B cell (primary cell): ENCODE measurements at regions of chr7 and their contacts with region 1.

Region 1: DNA sequence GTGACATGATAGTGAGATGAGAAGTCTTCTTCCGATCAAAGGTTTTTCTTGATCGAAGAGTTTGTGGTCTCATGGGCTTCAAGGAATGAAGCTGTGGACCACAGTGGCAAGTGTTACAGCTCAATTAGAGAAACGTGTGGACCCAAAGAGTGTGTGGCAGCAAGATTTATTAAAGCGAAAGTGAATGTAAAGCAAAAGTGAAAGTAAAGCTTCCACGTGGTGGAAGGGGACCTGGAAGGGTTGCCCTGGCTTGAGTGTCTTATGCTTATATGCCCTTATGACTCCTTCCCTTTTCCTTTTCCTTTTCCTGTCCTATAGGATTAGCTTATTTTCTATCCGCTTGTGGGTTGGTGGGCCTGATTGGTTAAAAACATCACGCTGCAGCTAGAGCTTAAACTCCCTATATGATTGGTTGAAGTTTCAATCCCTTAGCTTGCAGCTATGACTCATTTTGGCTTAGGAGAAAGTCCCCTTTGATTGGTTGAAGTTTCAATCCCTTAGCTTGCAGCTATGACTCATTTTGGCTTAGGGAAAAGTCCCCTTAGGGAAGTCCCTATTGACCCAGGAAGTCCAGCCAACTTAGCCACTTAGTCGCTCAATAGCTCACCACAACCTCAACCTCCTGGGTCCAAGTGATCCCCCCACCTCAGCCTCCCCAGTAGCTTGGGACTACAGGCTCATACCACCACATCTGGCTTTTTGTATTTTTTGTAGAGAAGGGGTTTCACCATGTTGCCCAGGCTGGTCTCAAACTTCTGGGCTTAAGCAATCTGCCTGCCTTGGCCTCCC is 34.7 kb downstream of the MRPS24 start:
- DNase-seq: peak; percentile 72
- ATAC-seq: peak; percentile 46
- H3K4me3 ChIP-seq: peak overlapping the region in 4 of 5 experiments; percentile 35 to 68 (median 50)
- H3K4me3 Mint-ChIP-seq: peak overlapping the region; percentile 93
- H3K27ac ChIP-seq: no peak overlapping the region
- H3K27ac Mint-ChIP-seq: peak overlapping the region; percentile 92
- H3K4me1 ChIP-seq: peaks cover 13 to 14% of the 10 kb centered on the region in 2 donors
- H3K4me1 Mint-ChIP-seq: peaks cover 18% of the 10 kb centered on the region
- H3K27me3 ChIP-seq: no peaks in the 10 kb centered on the region
- H3K27me3 Mint-ChIP-seq: peaks cover under 1% of the 10 kb centered on the region
- CTCF ChIP-seq: no peak

Region 2: DNA sequence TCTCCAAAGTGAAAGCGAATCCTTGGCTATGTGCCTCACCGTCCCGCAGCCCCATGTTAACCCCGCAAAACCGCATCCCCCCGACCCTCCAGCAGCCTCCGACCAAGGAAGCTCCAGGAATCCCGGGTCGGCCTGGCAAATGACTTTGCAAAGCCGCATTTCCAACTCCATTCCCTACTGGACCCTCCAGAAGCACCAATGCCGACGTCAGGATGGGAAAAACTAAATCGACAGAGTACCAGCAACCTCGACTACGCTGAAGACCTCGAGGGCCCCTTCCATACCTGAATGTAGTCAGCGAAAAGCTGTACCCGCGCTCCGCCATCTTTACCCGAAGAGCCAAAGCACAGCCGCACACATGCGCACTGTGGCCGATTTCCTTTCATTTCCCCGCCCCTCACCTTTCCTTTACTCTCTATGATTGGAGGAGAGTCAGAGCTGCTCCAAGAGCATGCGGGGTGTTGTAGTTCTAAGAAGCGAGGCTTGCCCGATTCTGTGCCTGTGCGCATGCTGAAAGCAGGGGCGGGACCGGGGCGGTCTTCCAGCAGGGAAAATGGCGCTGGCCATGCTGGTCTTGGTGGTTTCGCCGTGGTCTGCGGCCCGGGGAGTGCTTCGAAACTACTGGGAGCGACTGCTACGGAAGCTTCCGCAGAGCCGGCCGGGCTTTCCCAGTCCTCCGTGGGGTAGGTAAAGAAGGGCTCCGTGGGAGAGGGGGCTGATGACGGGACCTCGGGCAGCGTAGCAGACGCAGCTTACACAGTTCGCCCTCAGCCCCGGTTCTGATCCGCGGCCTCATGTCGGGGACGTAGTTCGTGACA is 902.6 kb before region 1 on chr7 and contains the starts of genes MRPL32 and PSMA2:
- CTCF ChIA-PET with region 1: interaction called, 4 read pairs
- POLR2A ChIA-PET with region 1: no interaction called
- intact Hi-C with region 1: loop called (anchors 1 kb)
- DNase-seq: peak; percentile 97
- ATAC-seq: peak; percentile 100
- H3K4me3 ChIP-seq: peak within 1 kb of the TSS; percentile 79 to 98 (median 90)
- H3K4me3 Mint-ChIP-seq: peak within 1 kb of the TSS; percentile 91
- H3K27ac ChIP-seq: peak within 1 kb of the TSS; percentile 77 to 88
- H3K27ac Mint-ChIP-seq: peak within 1 kb of the TSS; percentile 94
- H3K4me1 ChIP-seq: peaks cover 36 to 38% of the 10 kb centered on the region in 2 donors
- H3K4me1 Mint-ChIP-seq: peaks cover 67% of the 10 kb centered on the region
- H3K27me3 ChIP-seq: no peaks in the 10 kb centered on the region
- H3K27me3 Mint-ChIP-seq: no peaks in the 10 kb centered on the region
- CTCF ChIP-seq: no peak
- total RNA-seq, gene MRPL32: 31.7 and 34.2 TPM in 2 replicates
- total RNA-seq, gene PSMA2: 40.6 and 47.8 TPM in 2 replicates

Region 3: GRCh38 chr7:43721193-43721806 is 113.4 kb before region 1 on chr7:
- CTCF ChIA-PET with region 1: interaction called, 11 read pairs
- POLR2A ChIA-PET with region 1: no interaction called
- intact Hi-C with region 1: loop called (anchors 2 kb)
- DNase-seq: peak; percentile 73
- ATAC-seq: peak; percentile 33
- H3K4me3 ChIP-seq: no peak overlapping the region
- H3K4me3 Mint-ChIP-seq: no peak overlapping the region
- H3K27ac ChIP-seq: no peak overlapping the region
- H3K27ac Mint-ChIP-seq: no peak overlapping the region
- H3K4me1 ChIP-seq: no peaks in the 10 kb centered on the region
- H3K4me1 Mint-ChIP-seq: peaks cover 22% of the 10 kb centered on the region
- H3K27me3 ChIP-seq: no peaks in the 10 kb centered on the region
- H3K27me3 Mint-ChIP-seq: no peaks in the 10 kb centered on the region
- CTCF ChIP-seq: peak; percentile 89

Region 4: GRCh38 chr7:43847496-43847895 is 12.8 kb after region 1 on chr7:
- CTCF ChIA-PET with region 1: interaction called, 15 read pairs
- POLR2A ChIA-PET with region 1: no interaction called
- intact Hi-C with region 1: no loop called
- DNase-seq: no peak
- ATAC-seq: no peak
- H3K4me3 ChIP-seq: no peak overlapping the region
- H3K4me3 Mint-ChIP-seq: no peak overlapping the region
- H3K27ac ChIP-seq: no peak overlapping the region
- H3K27ac Mint-ChIP-seq: no peak overlapping the region
- H3K4me1 ChIP-seq: no peaks in the 10 kb centered on the region
- H3K4me1 Mint-ChIP-seq: no peaks in the 10 kb centered on the region
- H3K27me3 ChIP-seq: peaks cover 0 to 3% (median 0%) of the 10 kb centered on the region in 4 experiments
- H3K27me3 Mint-ChIP-seq: peaks cover 12% of the 10 kb centered on the region
- CTCF ChIP-seq: no peak

Region 5: DNA sequence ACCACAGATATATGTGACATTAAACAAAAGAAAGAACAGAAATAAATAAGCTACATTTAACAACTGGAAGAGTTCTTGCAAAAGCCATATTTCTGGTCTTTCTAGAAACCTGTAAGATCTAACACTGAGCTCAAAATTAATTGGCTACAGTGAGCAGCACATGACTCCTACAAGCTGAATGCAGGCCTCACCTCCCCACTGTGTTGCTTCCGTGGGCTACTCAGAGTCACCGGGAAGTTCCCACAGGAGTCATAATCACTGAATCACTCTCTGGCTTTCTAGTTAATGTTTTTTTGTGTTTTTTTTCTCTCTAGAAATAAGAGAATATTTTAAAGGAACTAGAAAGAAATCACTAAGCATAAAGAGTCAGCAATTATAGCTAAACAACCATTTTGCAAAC is 44.8 kb after region 1 on chr7:
- CTCF ChIA-PET with region 1: no interaction called
- POLR2A ChIA-PET with region 1: no interaction called
- intact Hi-C with region 1: no loop called
- DNase-seq: no peak
- ATAC-seq: no peak
- H3K4me3 ChIP-seq: no peak overlapping the region
- H3K4me3 Mint-ChIP-seq: no peak overlapping the region
- H3K27ac ChIP-seq: no peak overlapping the region
- H3K27ac Mint-ChIP-seq: no peak overlapping the region
- H3K4me1 ChIP-seq: peaks cover 0 to 5% of the 10 kb centered on the region in 2 donors
- H3K4me1 Mint-ChIP-seq: peaks cover 11% of the 10 kb centered on the region
- H3K27me3 ChIP-seq: no peaks in the 10 kb centered on the region
- H3K27me3 Mint-ChIP-seq: no peaks in the 10 kb centered on the region
- CTCF ChIP-seq: no peak